Endothelial cell of umbilical vein (primary cell): ENCODE measurements at regions of chr17 and their contacts with region 1.

Region 1: GRCh38 chr17:78176548-78177025 is 8.2 kb downstream of the SYNGR2 start:
- DNase-seq: peak; percentile 52
- H3K4me3 ChIP-seq: no peak overlapping the region
- H3K27ac ChIP-seq: no peak overlapping the region
- H3K4me1 ChIP-seq: peaks cover 8% of the 10 kb centered on the region
- H3K27me3 ChIP-seq: no peaks in the 10 kb centered on the region
- CTCF ChIP-seq: peak; percentile 96 to 98
- POLR2A ChIP-seq: no peak

Region 2: DNA sequence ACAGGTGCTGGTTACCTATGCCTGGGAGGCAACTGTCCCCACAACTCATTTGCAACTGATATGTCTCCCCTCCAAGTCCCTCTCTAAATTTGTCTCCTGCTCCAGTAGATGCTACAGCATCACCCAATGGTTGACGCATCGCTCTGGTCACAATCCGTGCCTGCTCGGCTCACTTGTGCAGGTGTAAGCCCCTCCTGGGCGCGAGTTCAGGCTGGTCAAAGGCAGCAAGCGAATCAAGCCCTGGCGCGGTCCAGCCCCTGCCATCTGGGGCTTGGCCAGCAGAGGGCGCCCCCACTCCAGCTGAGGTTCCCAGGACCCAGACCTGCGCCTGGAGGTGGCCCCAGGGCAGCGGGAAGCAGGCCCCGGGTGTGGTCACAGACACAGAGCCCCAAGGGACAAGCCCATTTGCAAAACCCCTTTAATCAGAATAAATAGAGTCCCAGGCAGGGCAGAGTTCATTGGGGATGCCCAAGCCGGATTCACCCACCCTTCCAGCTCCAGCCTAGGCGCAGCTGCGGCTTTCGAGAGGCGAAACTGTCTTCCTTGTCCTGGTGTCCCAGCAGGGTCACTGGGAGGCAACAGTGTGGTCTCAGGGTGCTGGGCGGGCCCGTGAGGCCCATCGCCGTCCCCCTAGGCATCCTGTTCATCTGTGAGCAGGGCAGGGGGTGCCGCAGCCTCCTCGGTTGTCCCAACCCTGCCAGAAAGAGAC is 63.9 kb before region 1 on chr17:
- CTCF ChIA-PET with region 1: interaction called, 55 read pairs
- POLR2A ChIA-PET with region 1: no interaction called
- dilution Hi-C with region 1: no loop called
- intact Hi-C with region 1: loop called (anchors 1 kb)
- DNase-seq: peak; percentile 51
- H3K4me3 ChIP-seq: no peak overlapping the region
- H3K27ac ChIP-seq: no peak overlapping the region
- H3K4me1 ChIP-seq: no peaks in the 10 kb centered on the region
- H3K27me3 ChIP-seq: no peaks in the 10 kb centered on the region
- CTCF ChIP-seq: peak; percentile 98 to 99
- POLR2A ChIP-seq: no peak

Region 3: GRCh38 chr17:78120971-78121800 is 55.4 kb before region 1 on chr17:
- CTCF ChIA-PET with region 1: interaction called, 17 read pairs
- POLR2A ChIA-PET with region 1: no interaction called
- dilution Hi-C with region 1: no loop called
- intact Hi-C with region 1: no loop called
- DNase-seq: no peak
- H3K4me3 ChIP-seq: no peak overlapping the region
- H3K27ac ChIP-seq: no peak overlapping the region
- H3K4me1 ChIP-seq: no peaks in the 10 kb centered on the region
- H3K27me3 ChIP-seq: no peaks in the 10 kb centered on the region
- CTCF ChIP-seq: no peak
- POLR2A ChIP-seq: no peak

Region 4: GRCh38 chr17:78128551-78129350 is 47.8 kb before region 1 on chr17 and contains the start of gene TMC6:
- CTCF ChIA-PET with region 1: interaction called, 13 read pairs
- POLR2A ChIA-PET with region 1: no interaction called
- dilution Hi-C with region 1: no loop called
- intact Hi-C with region 1: no loop called
- DNase-seq: peak; percentile 42
- H3K4me3 ChIP-seq: peak within 1 kb of the TSS; percentile 52 to 87 (median 67)
- H3K27ac ChIP-seq: peak within 1 kb of the TSS; percentile 56
- H3K4me1 ChIP-seq: peaks cover 26% of the 10 kb centered on the region
- H3K27me3 ChIP-seq: no peaks in the 10 kb centered on the region
- CTCF ChIP-seq: no peak
- POLR2A ChIP-seq: no peak
- total RNA-seq, gene TMC6: 58.0 and 72.4 TPM in 2 replicates